AG04449 (cell line): ENCODE measurements at regions of chr2 and their contacts with region 1.

Region 1: GRCh38 chr2:10434886-10435819 is 13.0 kb downstream of the ODC1 start:
- DNase-seq: no peak
- H3K4me3 ChIP-seq: no peak overlapping the region
- CTCF ChIP-seq: peak; percentile 99

Region 2: GRCh38 chr2:10072656-10073480 is 362.3 kb before region 1 on chr2:
- CTCF ChIA-PET with region 1: interaction called, 482 read pairs
- POLR2A ChIA-PET with region 1: no interaction called
- DNase-seq: peak; percentile 36
- H3K4me3 ChIP-seq: no peak overlapping the region
- CTCF ChIP-seq: peak; percentile 84

Region 3: GRCh38 chr2:10122386-10123280 is 312.5 kb before region 1 on chr2 and contains the start of gene RRM2:
- CTCF ChIA-PET with region 1: interaction called, 356 read pairs
- POLR2A ChIA-PET with region 1: no interaction called
- DNase-seq: no peak
- H3K4me3 ChIP-seq: peak within 1 kb of the TSS; percentile 78
- CTCF ChIP-seq: no peak

Region 4: GRCh38 chr2:10414000-10414451 is 21.1 kb before region 1 on chr2:
- CTCF ChIA-PET with region 1: interaction called, 60 read pairs
- POLR2A ChIA-PET with region 1: no interaction called
- DNase-seq: no peak
- H3K4me3 ChIP-seq: no peak overlapping the region
- CTCF ChIP-seq: no peak

Region 5: DNA sequence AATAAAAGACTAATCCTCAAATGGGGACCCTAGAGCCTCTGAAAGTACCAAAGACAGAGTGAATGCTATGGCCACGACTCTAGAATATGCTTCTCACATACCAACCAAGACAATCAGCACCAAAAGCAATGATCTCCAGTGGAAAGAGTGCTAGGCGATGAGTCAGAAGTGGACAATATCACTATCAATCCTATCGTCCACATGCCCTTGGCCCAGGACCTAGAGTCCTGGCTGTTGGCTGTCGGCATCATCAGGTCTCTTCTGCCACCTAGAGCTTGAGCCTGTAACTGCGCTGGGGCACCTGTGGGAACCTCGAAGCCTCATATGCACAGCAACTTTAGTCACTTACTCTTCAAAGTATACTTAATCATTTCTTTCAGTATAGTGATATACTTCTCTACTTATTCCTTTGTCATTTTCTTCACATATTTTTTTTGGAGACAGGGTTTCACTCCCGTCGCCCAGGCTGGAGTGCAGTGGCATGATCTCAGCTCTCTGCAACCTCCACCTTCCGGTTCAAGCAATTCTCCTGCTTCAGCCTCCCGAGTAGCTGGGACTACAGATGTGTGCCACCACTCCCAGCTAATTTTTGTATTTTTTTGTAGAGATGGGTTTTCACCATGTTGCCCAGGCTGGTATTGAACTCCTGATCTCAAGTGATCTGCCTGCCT is 224.9 kb after region 1 on chr2:
- CTCF ChIA-PET with region 1: interaction called, 11 read pairs
- POLR2A ChIA-PET with region 1: no interaction called
- DNase-seq: peak; percentile 50
- H3K4me3 ChIP-seq: no peak overlapping the region
- CTCF ChIP-seq: peak; percentile 81